CD4-positive, alpha-beta T cell (primary cell): ENCODE measurements at regions of chr2 and their contacts with region 1.

Region 1: GRCh38 chr2:182715896-182716668 is at the start of gene DNAJC10:
- DNase-seq: peak; percentile 61 to 94 (median 81)
- ATAC-seq: peak; percentile 80
- H3K4me3 ChIP-seq: peak within 1 kb of the TSS; percentile 89
- H3K4me3 Mint-ChIP-seq: no peak within 1 kb of the TSS
- H3K27ac ChIP-seq: peak within 1 kb of the TSS; percentile 65 to 82
- H3K27ac Mint-ChIP-seq: no peak within 1 kb of the TSS
- H3K4me1 ChIP-seq: peaks cover 5% of the 10 kb centered on the region
- H3K4me1 Mint-ChIP-seq: no peaks in the 10 kb centered on the region
- H3K27me3 ChIP-seq: no peaks in the 10 kb centered on the region
- H3K27me3 Mint-ChIP-seq: peaks cover under 1% of the 10 kb centered on the region
- CTCF ChIP-seq: no peak
- total RNA-seq, gene DNAJC10: 34.0 to 34.1 TPM

Region 2: GRCh38 chr2:182541268-182541667 is 174.8 kb before region 1 on chr2:
- CTCF ChIA-PET with region 1: no interaction called
- POLR2A ChIA-PET with region 1: no interaction called
- intact Hi-C with region 1: no loop called
- DNase-seq: no peak
- ATAC-seq: no peak
- H3K4me3 ChIP-seq: no peak overlapping the region
- H3K4me3 Mint-ChIP-seq: no peak overlapping the region
- H3K27ac ChIP-seq: no peak overlapping the region
- H3K27ac Mint-ChIP-seq: no peak overlapping the region
- H3K4me1 ChIP-seq: no peaks in the 10 kb centered on the region
- H3K4me1 Mint-ChIP-seq: no peaks in the 10 kb centered on the region
- H3K27me3 ChIP-seq: no peaks in the 10 kb centered on the region
- H3K27me3 Mint-ChIP-seq: no peaks in the 10 kb centered on the region
- CTCF ChIP-seq: no peak

Region 3: GRCh38 chr2:182666674-182667314 is 49.3 kb before region 1 on chr2:
- CTCF ChIA-PET with region 1: interaction called, 5 read pairs
- POLR2A ChIA-PET with region 1: no interaction called
- intact Hi-C with region 1: loop called in 1 of 2 experiments (anchors 5 kb)
- DNase-seq: peak in 5 of 14 experiments; percentile 3 to 65 (median 43)
- ATAC-seq: peak; percentile 49
- H3K4me3 ChIP-seq: no peak overlapping the region
- H3K4me3 Mint-ChIP-seq: no peak overlapping the region
- H3K27ac ChIP-seq: no peak overlapping the region
- H3K27ac Mint-ChIP-seq: no peak overlapping the region
- H3K4me1 ChIP-seq: no peaks in the 10 kb centered on the region
- H3K4me1 Mint-ChIP-seq: no peaks in the 10 kb centered on the region
- H3K27me3 ChIP-seq: no peaks in the 10 kb centered on the region
- H3K27me3 Mint-ChIP-seq: peaks cover 6% of the 10 kb centered on the region
- CTCF ChIP-seq: peak; percentile 70

Region 4: GRCh38 chr2:183038341-183039300 is 322.5 kb after region 1 on chr2 and contains the start of gene NCKAP1:
- CTCF ChIA-PET with region 1: no interaction called
- POLR2A ChIA-PET with region 1: no interaction called
- intact Hi-C with region 1: loop called (anchors 2 to 5 kb)
- DNase-seq: peak; percentile 63 to 91 (median 81)
- ATAC-seq: peak; percentile 85
- H3K4me3 ChIP-seq: peak within 1 kb of the TSS; percentile 65
- H3K4me3 Mint-ChIP-seq: peak within 1 kb of the TSS; percentile 91
- H3K27ac ChIP-seq: no peak within 1 kb of the TSS
- H3K27ac Mint-ChIP-seq: peak within 1 kb of the TSS; percentile 40
- H3K4me1 ChIP-seq: peaks cover 15% of the 10 kb centered on the region
- H3K4me1 Mint-ChIP-seq: peaks cover 39% of the 10 kb centered on the region
- H3K27me3 ChIP-seq: peaks cover 3 to 55% of the 10 kb centered on the region in 2 experiments
- H3K27me3 Mint-ChIP-seq: peaks cover 32% of the 10 kb centered on the region
- CTCF ChIP-seq: peak; percentile 64
- total RNA-seq, gene NCKAP1: 2.4 to 2.5 TPM

Region 5: DNA sequence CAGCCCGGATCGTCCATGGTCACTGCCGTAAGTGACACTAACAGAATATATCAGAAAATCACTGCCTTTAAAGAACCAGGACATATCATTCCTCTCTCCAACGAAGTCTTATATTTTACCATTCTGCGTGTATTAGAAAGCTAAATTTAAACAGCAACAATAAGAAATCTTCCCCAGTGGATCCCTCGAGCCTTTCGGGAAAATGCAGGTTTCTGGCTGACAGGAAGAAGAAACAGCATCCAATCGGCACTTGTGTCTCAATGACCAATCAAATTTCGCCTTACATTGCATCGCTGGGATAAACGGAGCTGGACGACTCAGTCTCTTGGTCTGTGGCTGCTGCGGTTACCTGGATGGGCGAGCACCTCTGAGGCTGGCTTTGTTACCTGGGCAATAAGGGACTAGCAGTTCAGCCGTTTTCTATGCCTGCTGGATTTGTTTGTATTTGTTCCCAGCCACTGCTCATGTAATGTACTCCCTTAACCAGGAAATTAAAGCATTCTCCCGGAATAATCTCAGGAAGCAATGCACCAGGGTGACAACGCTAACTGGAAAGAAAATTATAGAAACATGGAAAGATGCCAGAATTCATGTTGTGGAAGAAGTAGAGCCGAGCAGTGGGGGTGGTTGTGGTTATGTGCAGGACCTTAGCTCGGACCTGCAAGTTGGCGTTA is 362.5 kb after region 1 on chr2 and contains the start of gene DUSP19:
- CTCF ChIA-PET with region 1: no interaction called
- POLR2A ChIA-PET with region 1: no interaction called
- intact Hi-C with region 1: loop called in 1 of 2 experiments (anchors 5 kb)
- DNase-seq: peak; percentile 57 to 90 (median 74)
- ATAC-seq: peak; percentile 75
- H3K4me3 ChIP-seq: peak within 1 kb of the TSS; percentile 76
- H3K4me3 Mint-ChIP-seq: peak within 1 kb of the TSS; percentile 93
- H3K27ac ChIP-seq: no peak within 1 kb of the TSS
- H3K27ac Mint-ChIP-seq: peak within 1 kb of the TSS; percentile 64
- H3K4me1 ChIP-seq: peaks cover 6% of the 10 kb centered on the region
- H3K4me1 Mint-ChIP-seq: peaks cover 13% of the 10 kb centered on the region
- H3K27me3 ChIP-seq: no peaks in the 10 kb centered on the region
- H3K27me3 Mint-ChIP-seq: no peaks in the 10 kb centered on the region
- CTCF ChIP-seq: no peak
- total RNA-seq, gene DUSP19: 0.14 to 0.50 TPM

Region 6: GRCh38 chr2:183124222-183124956 is 408.3 kb after region 1 on chr2 and contains the start of gene NUP35:
- CTCF ChIA-PET with region 1: no interaction called
- POLR2A ChIA-PET with region 1: interaction called, 4 read pairs
- intact Hi-C with region 1: loop called in 1 of 2 experiments (anchors 2 kb)
- DNase-seq: peak; percentile 76 to 92 (median 80)
- ATAC-seq: peak; percentile 94
- H3K4me3 ChIP-seq: peak within 1 kb of the TSS; percentile 90
- H3K4me3 Mint-ChIP-seq: peak within 1 kb of the TSS; percentile 96
- H3K27ac ChIP-seq: peak within 1 kb of the TSS; percentile 76 to 95
- H3K27ac Mint-ChIP-seq: peak within 1 kb of the TSS; percentile 99
- H3K4me1 ChIP-seq: peaks cover 12% of the 10 kb centered on the region
- H3K4me1 Mint-ChIP-seq: peaks cover 47% of the 10 kb centered on the region
- H3K27me3 ChIP-seq: no peaks in the 10 kb centered on the region
- H3K27me3 Mint-ChIP-seq: peaks cover 12% of the 10 kb centered on the region
- CTCF ChIP-seq: no peak
- total RNA-seq, gene NUP35: 12.5 to 13.1 TPM